ENCODE measurements at regions of chr1 and their contacts with region 1.

Region 1: DNA sequence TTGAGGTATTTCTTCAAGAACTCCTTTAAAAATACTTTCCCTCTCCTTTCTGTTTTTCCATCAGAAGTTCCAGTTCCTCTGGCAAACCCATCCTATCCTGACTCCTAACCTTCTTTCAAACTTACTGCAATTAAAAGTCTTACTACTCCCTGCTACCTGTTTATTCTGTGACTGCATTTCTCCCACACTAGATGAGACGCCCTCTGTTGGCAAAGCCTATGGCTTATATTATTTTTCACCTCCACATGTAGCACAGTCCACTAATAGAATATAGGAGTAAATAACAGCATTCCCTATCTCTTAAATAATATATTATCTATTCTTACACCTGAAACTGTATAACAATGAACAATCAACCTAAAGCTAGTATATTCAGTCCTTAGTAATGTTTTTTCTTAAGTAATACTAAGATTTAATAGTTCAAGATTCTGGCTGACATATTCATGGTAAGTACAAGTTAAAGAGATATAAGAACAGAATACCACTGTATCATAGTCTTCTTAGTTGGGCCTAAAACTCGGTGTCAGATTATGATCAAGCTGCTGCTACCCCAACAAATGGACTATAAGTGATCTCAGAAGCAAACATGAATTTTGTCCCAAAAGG is 54.8 kb downstream of the RAB3GAP2 start:
- DNase-seq: no peak
- ATAC-seq: peak; percentile 14; the same call in 1 of the 3 replicates
- H3K4me3 ChIP-seq: no peak overlapping the region
- H3K27ac ChIP-seq: no peak overlapping the region
- H3K4me1 ChIP-seq: peaks cover 14% of the 10 kb centered on the region
- H3K27me3 ChIP-seq: no peaks in the 10 kb centered on the region
- CTCF ChIP-seq: peak; percentile 45 to 54 (median 53); a peak in 5 of 6 replicates
- EP300 ChIP-seq: no peak
- POLR2A ChIP-seq: no peak
- RAD21 ChIP-seq: peak; percentile 37

Region 2: GRCh38 chr1:220189750-220190347 is 27.6 kb before region 1 on chr1:
- CTCF ChIA-PET with region 1: interaction called, 101 read pairs
- POLR2A ChIA-PET with region 1: interaction called, 4 read pairs
- RAD21 ChIA-PET with region 1: interaction called, 8 read pairs
- SMC1A ChIA-PET with region 1: interaction called, 16 read pairs
- in situ Hi-C with region 1: no loop called
- intact Hi-C with region 1: no loop called
- DNase-seq: no peak
- ATAC-seq: peak; percentile 67
- H3K4me3 ChIP-seq: no peak overlapping the region
- H3K27ac ChIP-seq: no peak overlapping the region
- H3K4me1 ChIP-seq: no peaks in the 10 kb centered on the region
- H3K27me3 ChIP-seq: no peaks in the 10 kb centered on the region
- CTCF ChIP-seq: peak in 2 of 3 experiments; percentile 34 to 53; a peak in 3 of 6 replicates
- EP300 ChIP-seq: no peak
- POLR2A ChIP-seq: no peak
- RAD21 ChIP-seq: peak; percentile 47; the same call in 1 of the 2 replicates

Region 3: DNA sequence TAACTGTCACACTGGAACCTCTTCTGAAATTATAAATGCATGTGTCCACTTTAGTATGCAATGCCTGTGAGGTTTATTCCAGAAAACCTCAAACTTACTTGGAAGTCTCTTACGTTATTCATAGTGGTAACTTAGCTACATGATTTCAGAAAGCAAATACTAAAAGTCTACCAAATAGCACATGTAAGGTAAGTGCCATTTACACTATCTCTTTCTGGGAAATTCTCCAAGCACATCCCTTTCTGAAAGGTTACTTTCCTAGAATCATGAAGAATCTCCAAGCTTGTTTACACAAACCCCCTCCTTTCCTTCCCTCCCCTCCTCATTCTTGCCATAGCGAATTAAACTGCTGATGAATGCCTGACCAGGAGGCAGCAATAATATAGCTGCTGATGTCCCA is 12.3 kb after region 1 on chr1:
- CTCF ChIA-PET with region 1: interaction called, 35 read pairs
- POLR2A ChIA-PET with region 1: interaction called, 18 read pairs
- RAD21 ChIA-PET with region 1: interaction called, 31 read pairs
- SMC1A ChIA-PET with region 1: interaction called, 57 read pairs
- in situ Hi-C with region 1: no loop called
- intact Hi-C with region 1: no loop called
- DNase-seq: no peak
- ATAC-seq: no peak
- H3K4me3 ChIP-seq: no peak overlapping the region
- H3K27ac ChIP-seq: no peak overlapping the region
- H3K4me1 ChIP-seq: no peaks in the 10 kb centered on the region
- H3K27me3 ChIP-seq: no peaks in the 10 kb centered on the region
- CTCF ChIP-seq: no peak
- EP300 ChIP-seq: no peak
- POLR2A ChIP-seq: no peak
- RAD21 ChIP-seq: no peak

Region 4: DNA sequence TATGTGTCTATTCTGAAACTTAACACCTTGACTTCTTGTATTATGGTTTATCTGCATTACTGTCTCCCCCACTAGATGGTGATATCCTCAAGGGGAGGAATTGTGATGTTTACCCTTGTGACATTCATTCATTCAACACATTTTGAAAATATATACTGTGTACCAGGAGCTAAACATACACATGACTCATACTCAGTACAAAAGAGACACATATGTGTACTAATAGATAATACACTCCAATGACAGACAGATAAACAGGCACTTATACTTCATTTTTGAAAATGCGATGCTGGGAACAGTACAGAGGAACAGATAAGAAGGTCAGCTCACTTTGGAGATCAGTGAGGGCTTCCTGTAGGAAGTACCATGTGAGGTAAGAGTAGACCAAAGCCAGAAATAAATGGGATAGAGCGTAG is 63.7 kb after region 1 on chr1:
- CTCF ChIA-PET with region 1: interaction called, 69 read pairs
- POLR2A ChIA-PET with region 1: interaction called, 12 read pairs
- RAD21 ChIA-PET with region 1: interaction called, 59 read pairs
- SMC1A ChIA-PET with region 1: interaction called, 250 read pairs
- in situ Hi-C with region 1: no loop called
- intact Hi-C with region 1: no loop called
- DNase-seq: no peak
- ATAC-seq: peak; percentile 78
- H3K4me3 ChIP-seq: no peak overlapping the region
- H3K27ac ChIP-seq: no peak overlapping the region
- H3K4me1 ChIP-seq: no peaks in the 10 kb centered on the region
- H3K27me3 ChIP-seq: peaks cover 0 to 2% of the 10 kb centered on the region in 2 experiments; a peak in 1 of 4 replicates
- CTCF ChIP-seq: peak; percentile 24 to 52 (median 40); a peak in 5 of 6 replicates
- EP300 ChIP-seq: no peak
- POLR2A ChIP-seq: no peak
- RAD21 ChIP-seq: peak; percentile 77

Region 5: DNA sequence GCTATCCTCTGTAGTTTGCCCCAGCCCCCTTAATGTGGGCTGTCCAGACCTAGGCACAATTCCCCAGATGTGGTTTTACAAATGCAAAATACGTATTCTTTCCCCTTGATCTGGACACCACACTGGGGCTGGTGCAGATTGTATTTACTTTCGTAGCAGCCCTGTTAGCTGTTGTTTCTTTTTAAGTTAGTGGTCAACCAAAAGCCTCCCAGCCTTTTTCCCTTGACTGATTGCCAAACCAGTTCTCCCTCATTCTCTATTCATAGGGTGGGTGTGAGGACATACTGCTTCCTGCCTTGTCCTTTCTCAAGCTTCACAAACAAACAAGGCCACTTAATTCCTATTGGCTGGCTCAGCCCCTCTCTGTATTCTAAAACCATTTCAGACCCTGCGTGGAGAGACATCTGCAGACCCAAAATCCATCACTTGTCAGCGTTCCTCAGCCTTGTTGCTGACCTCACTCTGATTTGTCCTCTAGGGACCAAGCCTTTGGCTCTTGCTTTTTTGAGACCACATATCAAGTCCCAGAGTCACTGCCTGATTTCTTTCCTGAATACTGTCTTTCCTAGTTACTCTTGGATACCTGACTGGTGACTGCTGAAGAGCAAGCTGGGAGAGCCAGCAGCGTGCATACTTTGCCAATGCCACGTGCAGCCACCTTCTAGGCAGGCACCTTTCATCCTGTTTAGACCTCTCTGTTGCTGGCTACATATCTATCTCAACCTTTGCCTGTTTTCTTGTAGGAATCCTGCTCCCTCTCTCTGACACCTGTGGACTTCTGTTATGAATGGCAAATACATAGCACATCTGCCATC is 151.2 kb after region 1 on chr1:
- CTCF ChIA-PET with region 1: no interaction called
- POLR2A ChIA-PET with region 1: no interaction called
- RAD21 ChIA-PET with region 1: no interaction called
- SMC1A ChIA-PET with region 1: interaction called, 6 read pairs
- in situ Hi-C with region 1: no loop called
- intact Hi-C with region 1: loop called (anchors 5 kb)
- DNase-seq: no peak
- ATAC-seq: peak; percentile 77
- H3K4me3 ChIP-seq: no peak overlapping the region
- H3K27ac ChIP-seq: no peak overlapping the region
- H3K4me1 ChIP-seq: no peaks in the 10 kb centered on the region; the same call in 1 of the 2 replicates
- H3K27me3 ChIP-seq: 0 out of 4 replicates have a peak, but pooled peaks cover 0 to 2% of the 10 kb centered on the region in 2 experiments
- CTCF ChIP-seq: no peak
- EP300 ChIP-seq: no peak
- POLR2A ChIP-seq: no peak
- RAD21 ChIP-seq: no peak

Region 6: GRCh38 chr1:220776720-220777326 is 559.3 kb after region 1 on chr1:
- CTCF ChIA-PET with region 1: interaction called, 25 read pairs
- POLR2A ChIA-PET with region 1: no interaction called
- RAD21 ChIA-PET with region 1: interaction called, 33 read pairs
- SMC1A ChIA-PET with region 1: interaction called, 8 read pairs
- in situ Hi-C with region 1: no loop called
- intact Hi-C with region 1: loop called (anchors 2 kb)
- DNase-seq: no peak
- ATAC-seq: peak; percentile 93
- H3K4me3 ChIP-seq: no peak overlapping the region
- H3K27ac ChIP-seq: no peak overlapping the region
- H3K4me1 ChIP-seq: no peaks in the 10 kb centered on the region
- H3K27me3 ChIP-seq: no peaks in the 10 kb centered on the region
- CTCF ChIP-seq: peak; percentile 92 to 96 (median 94)
- EP300 ChIP-seq: no peak
- POLR2A ChIP-seq: no peak
- RAD21 ChIP-seq: peak; percentile 86

Measured in GM12878 (cell line).